Cardiac septum (tissue), 1 donor: ENCODE measurements at regions of chr5 and their contacts with region 1.

Region 1: GRCh38 chr5:173265433-173265832 is 30.4 kb upstream of the NKX2-5 start:
- DNase-seq: peak; percentile 88

Region 2: GRCh38 chr5:173245319-173246134 is 19.9 kb before region 1 on chr5:
- intact Hi-C with region 1: loop called (anchors 2 kb)
- DNase-seq: no peak

Region 3: DNA sequence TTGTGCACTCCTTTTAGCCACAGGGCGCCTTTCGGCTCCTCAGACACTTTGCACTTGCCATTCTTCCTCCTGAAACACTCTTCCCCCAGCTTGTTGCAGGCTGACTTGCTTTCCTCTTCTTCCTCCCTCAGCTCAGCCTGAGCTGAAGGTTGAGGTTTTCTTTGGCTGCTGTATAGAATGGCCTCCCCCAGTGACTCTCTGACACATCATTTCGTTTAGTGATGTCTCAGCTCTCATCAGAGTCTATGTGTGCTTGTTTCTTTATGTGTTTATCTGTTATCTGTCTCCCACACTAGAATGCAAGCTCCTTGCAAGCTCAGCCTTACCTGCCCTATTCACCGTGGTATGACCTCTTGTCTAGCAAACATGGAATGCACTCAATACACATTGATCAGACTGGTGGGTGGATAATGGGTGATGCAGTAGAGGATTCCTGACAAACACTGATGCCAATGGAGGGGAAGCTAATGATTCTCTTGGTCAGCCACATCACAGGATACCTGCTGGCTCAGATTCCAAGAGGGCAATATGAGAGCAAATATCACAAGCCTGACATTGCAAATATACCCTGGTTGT is 175.7 kb after region 1 on chr5:
- intact Hi-C with region 1: no loop called
- DNase-seq: no peak